H1 (cell line): ENCODE measurements at regions of chr22 and their contacts with region 1.

Region 1: DNA sequence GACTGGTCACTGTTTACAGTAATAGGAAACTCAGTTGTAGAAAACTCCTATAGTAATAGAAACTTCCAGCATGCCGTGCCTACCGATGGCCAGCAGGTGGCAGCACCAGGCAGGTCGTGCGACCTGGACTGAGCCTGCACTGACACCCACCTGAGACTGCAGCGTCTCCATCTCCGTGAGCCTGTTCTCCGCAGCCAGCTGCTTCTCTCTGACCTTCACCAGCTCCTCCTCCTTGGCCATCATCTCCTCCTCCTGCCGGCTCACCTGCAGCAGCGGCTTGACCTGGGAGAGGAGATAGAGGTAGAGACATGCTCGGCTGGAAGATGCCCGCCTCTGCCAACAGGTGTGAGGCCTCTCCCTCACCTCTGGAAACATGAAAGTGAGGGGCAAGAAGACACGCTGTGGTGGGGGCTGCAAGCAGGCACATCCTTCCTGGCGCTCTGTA is 48.5 kb downstream of the APOL1 start:
- DNase-seq: peak; percentile 71 to 93
- H3K4me3 ChIP-seq: no peak overlapping the region
- H3K27ac ChIP-seq: no peak overlapping the region
- H3K4me1 ChIP-seq: no peaks in the 10 kb centered on the region
- H3K27me3 ChIP-seq: no peaks in the 10 kb centered on the region
- CTCF ChIP-seq: peak; percentile 86 to 99 (median 98)
- EP300 ChIP-seq: no peak
- POLR2A ChIP-seq: 0 out of 3 replicates have a peak, but pooled peaks of 1 of the 2 experiments have one; percentile 41
- RAD21 ChIP-seq: peak; percentile 89

Region 2: GRCh38 chr22:36198536-36198935 is 102.9 kb before region 1 on chr22:
- CTCF ChIA-PET with region 1: no interaction called
- POLR2A ChIA-PET with region 1: no interaction called
- DNase-seq: no peak
- H3K4me3 ChIP-seq: no peak overlapping the region
- H3K27ac ChIP-seq: no peak overlapping the region
- H3K4me1 ChIP-seq: peaks cover 0 to 11% (median 9%) of the 10 kb centered on the region in 4 experiments; a peak in 6 of 7 replicates
- H3K27me3 ChIP-seq: no peaks in the 10 kb centered on the region
- CTCF ChIP-seq: no peak
- EP300 ChIP-seq: no peak
- POLR2A ChIP-seq: no peak
- RAD21 ChIP-seq: no peak

Region 3: DNA sequence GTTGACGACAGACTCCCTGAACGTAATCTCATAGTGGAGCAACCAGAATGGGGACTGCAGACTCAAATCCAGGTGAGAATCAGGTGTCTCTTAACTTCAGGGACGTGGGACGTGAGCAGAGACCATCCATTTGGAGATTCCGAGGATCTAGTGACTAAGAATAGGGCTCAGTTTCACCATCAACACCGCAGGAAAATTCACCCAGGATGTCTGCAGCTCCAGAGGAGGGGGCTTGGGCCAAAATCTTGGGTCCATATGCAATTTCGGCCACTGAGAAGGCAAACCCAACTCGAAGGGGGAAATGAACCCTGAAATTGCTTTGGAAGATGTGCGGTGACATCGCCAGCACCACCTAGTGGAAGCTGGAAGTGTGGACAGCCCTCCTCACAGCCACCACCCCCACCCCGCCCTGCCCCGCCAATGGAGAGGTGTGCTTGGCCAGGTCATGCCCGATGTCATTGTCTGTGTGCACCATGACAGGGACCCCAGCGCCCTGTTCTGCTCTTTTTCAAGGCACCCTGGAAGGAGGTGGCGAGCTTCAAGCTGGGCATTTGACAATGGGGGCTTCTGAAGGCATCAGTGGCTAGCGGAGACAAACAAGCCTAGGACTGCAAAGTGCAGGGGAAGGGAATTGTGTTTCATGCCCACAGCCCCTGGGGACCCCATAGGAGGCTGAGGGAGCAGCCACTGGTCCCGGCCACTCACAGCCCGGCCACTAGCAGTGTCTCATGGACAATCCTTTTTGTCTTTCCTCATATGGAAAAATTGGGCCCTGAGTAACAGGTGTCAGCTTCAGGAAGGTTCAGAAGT is 23.7 kb before region 1 on chr22:
- CTCF ChIA-PET with region 1: interaction called, 159 read pairs
- POLR2A ChIA-PET with region 1: interaction called, 4 read pairs
- DNase-seq: peak; percentile 56 to 77
- H3K4me3 ChIP-seq: peak overlapping the region in 1 of 4 experiments; percentile 39; a peak in 4 of 8 replicates
- H3K27ac ChIP-seq: no peak overlapping the region
- H3K4me1 ChIP-seq: no peaks in the 10 kb centered on the region; a peak in 3 of 7 replicates
- H3K27me3 ChIP-seq: no peaks in the 10 kb centered on the region
- CTCF ChIP-seq: peak; percentile 71 to 94 (median 86)
- EP300 ChIP-seq: no peak
- POLR2A ChIP-seq: 0 out of 3 replicates have a peak, but pooled peaks of 1 of the 2 experiments have one; percentile 17
- RAD21 ChIP-seq: peak; percentile 66 to 68

Region 4: DNA sequence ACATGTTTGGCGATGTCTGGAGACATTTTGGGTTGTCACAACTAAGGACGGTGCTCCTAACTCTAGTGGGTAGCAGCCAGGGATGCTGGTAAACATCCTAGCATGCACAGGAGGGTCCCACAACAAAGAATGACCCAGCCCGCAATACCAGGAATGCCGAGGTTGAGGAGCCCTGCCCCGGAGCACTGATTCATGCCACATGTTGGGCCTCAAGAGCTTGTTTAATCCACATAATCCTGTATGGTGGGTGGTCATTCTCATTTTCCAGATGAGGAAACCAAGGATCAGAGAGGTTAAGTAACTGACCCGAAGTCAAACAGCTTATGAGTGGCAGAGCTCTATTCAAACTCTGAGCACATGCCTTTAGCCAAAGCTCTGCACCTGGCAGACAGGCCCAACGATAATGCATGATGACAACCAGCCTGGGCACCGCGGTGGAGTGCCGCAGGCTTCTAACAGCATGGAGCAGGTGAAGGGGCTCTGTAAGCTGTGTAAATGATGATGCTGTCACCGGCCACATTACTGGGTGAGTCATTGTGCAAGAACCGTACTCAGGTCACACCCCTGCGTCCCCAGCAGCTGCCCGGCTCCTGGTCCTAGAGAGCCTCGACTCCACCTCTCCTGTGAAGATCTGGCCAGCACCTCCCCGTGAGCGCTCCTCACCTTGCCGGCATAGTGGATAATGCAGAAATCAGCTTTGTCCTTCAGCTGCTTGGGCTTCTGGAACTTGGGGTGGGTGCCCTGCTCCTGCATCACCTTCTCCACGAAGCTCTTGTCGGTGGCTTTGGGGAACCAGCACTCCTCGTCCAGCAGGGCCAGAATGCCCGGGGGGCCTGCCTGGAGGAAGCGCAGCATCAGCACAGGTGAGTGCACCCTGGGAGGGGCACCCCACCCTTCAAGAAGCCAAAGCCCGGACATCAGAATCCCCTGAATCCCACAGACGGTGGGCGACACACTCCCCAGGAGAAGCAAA is 10.3 kb after region 1 on chr22:
- CTCF ChIA-PET with region 1: interaction called, 59 read pairs
- POLR2A ChIA-PET with region 1: interaction called, 6 read pairs
- DNase-seq: no peak
- H3K4me3 ChIP-seq: no peak overlapping the region
- H3K27ac ChIP-seq: no peak overlapping the region
- H3K4me1 ChIP-seq: no peaks in the 10 kb centered on the region
- H3K27me3 ChIP-seq: no peaks in the 10 kb centered on the region
- CTCF ChIP-seq: no peak
- EP300 ChIP-seq: no peak
- POLR2A ChIP-seq: no peak
- RAD21 ChIP-seq: no peak

Region 5: DNA sequence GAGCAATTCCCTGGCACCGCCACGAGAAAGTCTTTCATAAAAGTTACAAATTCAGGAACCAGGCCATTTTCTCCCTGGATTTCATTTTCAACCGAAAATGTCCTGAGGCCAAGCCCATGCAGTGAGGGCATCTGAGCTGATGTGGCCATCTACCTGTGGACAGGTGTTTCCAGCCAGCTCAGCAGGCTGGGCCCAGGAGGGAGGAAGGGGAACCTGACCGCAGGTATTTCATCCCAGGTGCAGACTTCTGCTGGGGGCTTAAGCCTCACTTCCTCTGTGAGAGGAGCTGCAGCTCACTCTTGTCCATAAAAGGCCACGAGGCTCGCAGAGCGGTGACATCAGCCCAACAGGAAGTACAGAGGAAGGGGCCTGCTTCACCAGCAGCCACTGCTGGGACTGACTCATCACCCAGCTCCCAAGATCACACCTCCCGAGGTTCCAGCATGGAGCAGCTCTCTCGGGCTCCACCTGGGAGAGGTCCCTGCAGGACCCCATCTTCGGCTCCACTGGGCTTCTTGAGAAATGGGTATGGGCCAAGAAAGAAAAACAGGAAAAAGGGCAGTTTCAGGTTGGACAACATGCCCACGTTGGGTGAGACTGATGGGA is 30.0 kb after region 1 on chr22:
- CTCF ChIA-PET with region 1: interaction called, 37 read pairs
- POLR2A ChIA-PET with region 1: interaction called, 4 read pairs
- DNase-seq: peak in 1 of 2 experiments; percentile 65
- H3K4me3 ChIP-seq: no peak overlapping the region
- H3K27ac ChIP-seq: peak overlapping the region; percentile 98
- H3K4me1 ChIP-seq: peaks cover 9 to 52% (median 33%) of the 10 kb centered on the region in 4 experiments
- H3K27me3 ChIP-seq: no peaks in the 10 kb centered on the region
- CTCF ChIP-seq: no peak
- EP300 ChIP-seq: peak in 1 of 2 experiments; percentile 84; a peak in 1 of 3 replicates
- POLR2A ChIP-seq: peak in 1 of 2 experiments; percentile 59; a peak in 2 of 3 replicates
- RAD21 ChIP-seq: no peak

Region 6: GRCh38 chr22:36461669-36462649 is 160.6 kb after region 1 on chr22:
- CTCF ChIA-PET with region 1: interaction called, 78 read pairs
- POLR2A ChIA-PET with region 1: no interaction called
- DNase-seq: peak; percentile 61 to 64
- H3K4me3 ChIP-seq: no peak overlapping the region; a peak in 1 of 8 replicates
- H3K27ac ChIP-seq: no peak overlapping the region
- H3K4me1 ChIP-seq: peaks cover 3 to 20% (median 12%) of the 10 kb centered on the region in 4 experiments; a peak in 6 of 7 replicates
- H3K27me3 ChIP-seq: no peaks in the 10 kb centered on the region
- CTCF ChIP-seq: no peak
- EP300 ChIP-seq: no peak
- POLR2A ChIP-seq: no peak
- RAD21 ChIP-seq: no peak

Region 7: DNA sequence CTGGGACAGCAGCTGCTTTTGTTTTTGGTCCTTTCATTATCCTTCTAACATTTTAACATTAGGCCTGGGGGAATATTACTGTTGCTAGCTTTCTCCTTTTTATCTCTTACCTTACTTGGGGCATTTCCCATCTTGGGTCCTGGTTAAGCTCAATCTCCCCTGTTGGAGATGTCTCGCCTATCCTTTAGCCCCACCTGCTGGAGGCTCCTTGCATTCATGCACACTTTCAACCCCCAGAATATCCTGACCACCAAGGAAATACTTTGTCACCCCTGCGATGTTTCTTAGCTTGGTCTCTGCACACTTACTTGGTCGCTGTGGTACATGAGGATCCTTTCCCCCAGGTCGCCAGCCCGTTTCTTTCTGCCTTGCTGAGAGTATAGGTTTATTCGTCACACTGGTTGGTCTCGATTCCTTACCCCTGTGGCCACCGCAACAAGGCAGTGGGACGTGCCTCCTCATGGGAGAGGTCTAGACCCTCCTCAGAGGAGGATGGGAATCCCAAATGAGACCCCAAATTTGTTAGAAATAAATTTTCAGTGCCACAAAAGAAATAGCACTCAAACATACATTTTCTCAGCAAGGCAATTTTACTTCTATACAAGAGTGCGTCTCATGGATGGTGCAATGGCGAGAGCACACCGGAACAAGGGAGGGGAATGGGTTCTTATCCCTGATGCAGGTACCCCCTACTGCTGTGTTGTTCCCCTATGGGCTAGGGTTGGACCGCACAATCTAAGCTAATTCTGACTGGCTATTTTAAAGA is 185.4 kb after region 1 on chr22:
- CTCF ChIA-PET with region 1: interaction called, 31 read pairs
- POLR2A ChIA-PET with region 1: interaction called, 3 read pairs
- DNase-seq: peak in 1 of 2 experiments; percentile 85
- H3K4me3 ChIP-seq: no peak overlapping the region
- H3K27ac ChIP-seq: no peak overlapping the region
- H3K4me1 ChIP-seq: no peaks in the 10 kb centered on the region; a peak in 1 of 7 replicates
- H3K27me3 ChIP-seq: peaks cover 0 to 7% (median 5%) of the 10 kb centered on the region in 4 experiments; a peak in 5 of 7 replicates
- CTCF ChIP-seq: peak; percentile 70 to 86 (median 83)
- EP300 ChIP-seq: no peak
- POLR2A ChIP-seq: no peak
- RAD21 ChIP-seq: peak; percentile 83 to 91